Panc1 (cell line): ENCODE measurements at regions of chr7 and their contacts with region 1.

Region 1: DNA sequence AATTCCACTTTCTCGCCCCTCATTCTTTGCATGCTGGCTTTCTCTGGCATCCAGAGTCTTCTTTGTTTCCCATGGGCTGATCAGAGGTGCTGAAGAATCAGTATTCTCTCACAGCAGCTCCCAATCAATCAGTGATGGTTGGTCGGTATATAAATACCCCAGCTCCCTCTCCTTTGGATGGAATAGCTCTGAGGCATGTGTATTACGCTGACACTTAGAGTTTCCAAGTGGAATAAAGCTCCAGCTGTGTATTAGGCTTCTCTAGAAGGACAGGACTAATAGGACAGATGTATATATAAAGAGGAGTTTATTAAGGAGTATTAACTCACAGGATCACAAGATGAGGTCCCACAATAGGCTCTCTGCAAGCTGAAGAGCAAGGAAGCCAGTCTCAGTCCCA is 218.3 kb upstream of the GRB10 start:
- DNase-seq: no peak
- ATAC-seq: peak; percentile 83; the same call in 1 of the 2 replicates
- H3K4me3 ChIP-seq: no peak overlapping the region
- H3K27ac ChIP-seq: no peak overlapping the region
- H3K4me1 ChIP-seq: no peaks in the 10 kb centered on the region
- H3K27me3 ChIP-seq: peaks cover 3% of the 10 kb centered on the region; the same call in 1 of the 2 replicates
- CTCF ChIP-seq: peak; percentile 68

Region 2: GRCh38 chr7:51014821-51015220 is 13.9 kb after region 1 on chr7:
- CTCF ChIA-PET with region 1: no interaction called
- POLR2A ChIA-PET with region 1: interaction called, 12 read pairs
- in situ Hi-C with region 1: no loop called
- intact Hi-C with region 1: no loop called
- DNase-seq: no peak
- ATAC-seq: no peak
- H3K4me3 ChIP-seq: no peak overlapping the region
- H3K27ac ChIP-seq: no peak overlapping the region
- H3K4me1 ChIP-seq: no peaks in the 10 kb centered on the region
- H3K27me3 ChIP-seq: no peaks in the 10 kb centered on the region; the same call in 1 of the 2 replicates
- CTCF ChIP-seq: no peak

Region 3: DNA sequence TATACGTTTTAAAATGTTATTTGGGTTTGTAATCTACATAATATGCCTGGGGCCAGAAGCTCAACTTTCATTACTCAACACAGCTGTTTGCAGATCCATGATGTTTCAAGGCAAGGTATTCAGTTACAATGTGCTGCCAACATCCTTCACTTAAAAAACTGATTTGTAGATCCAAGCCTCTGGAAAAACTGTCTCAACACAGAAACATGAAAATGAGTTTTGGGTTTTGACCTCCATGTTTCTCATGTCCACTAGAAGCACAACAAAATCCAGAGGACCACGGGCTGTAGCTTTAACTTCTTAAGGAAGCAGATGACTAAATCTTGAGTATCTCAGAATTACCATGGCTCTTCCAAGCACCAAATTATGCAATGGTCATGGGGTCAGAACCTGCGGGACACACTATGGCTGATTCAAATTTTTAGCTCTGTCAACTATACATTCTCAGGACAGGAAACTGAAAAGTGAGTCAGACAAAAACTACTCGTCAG is 28.8 kb after region 1 on chr7:
- CTCF ChIA-PET with region 1: no interaction called
- POLR2A ChIA-PET with region 1: no interaction called
- in situ Hi-C with region 1: no loop called
- intact Hi-C with region 1: no loop called
- DNase-seq: no peak
- ATAC-seq: no peak
- H3K4me3 ChIP-seq: no peak overlapping the region
- H3K27ac ChIP-seq: no peak overlapping the region
- H3K4me1 ChIP-seq: no peaks in the 10 kb centered on the region
- H3K27me3 ChIP-seq: no peaks in the 10 kb centered on the region; the same call in none of the 2 replicates
- CTCF ChIP-seq: no peak